ENCODE measurements at regions of chr1 and their contacts with region 1.

Region 1: GRCh38 chr1:165898837-165899236 is 71.4 kb downstream of the UCK2 start:
- DNase-seq: peak in 1 of 2 donors; percentile 61
- ATAC-seq: peak; percentile 74 to 85 (median 80)
- H3K4me3 ChIP-seq: no peak overlapping the region
- H3K27ac ChIP-seq: peak overlapping the region; percentile 93
- H3K4me1 ChIP-seq: peaks cover 46% of the 10 kb centered on the region
- H3K27me3 ChIP-seq: no peaks in the 10 kb centered on the region
- CTCF ChIP-seq: no peak

Region 2: GRCh38 chr1:165842671-165843129 is 56.1 kb before region 1 on chr1:
- intact Hi-C with region 1: loop called in 1 of 2 experiments (anchors 5 kb)
- DNase-seq: no peak
- ATAC-seq: peak; percentile 31 to 84 (median 74)
- H3K4me3 ChIP-seq: no peak overlapping the region
- H3K27ac ChIP-seq: peak overlapping the region; percentile 77
- H3K4me1 ChIP-seq: peaks cover 52% of the 10 kb centered on the region
- H3K27me3 ChIP-seq: no peaks in the 10 kb centered on the region
- CTCF ChIP-seq: no peak

Region 3: GRCh38 chr1:165857046-165857801 is 41.6 kb before region 1 on chr1:
- intact Hi-C with region 1: loop called in 1 of 2 experiments (anchors 5 kb)
- DNase-seq: peak in 1 of 2 donors; percentile 24
- ATAC-seq: peak; percentile 66 to 86 (median 84)
- H3K4me3 ChIP-seq: peak overlapping the region; percentile 34
- H3K27ac ChIP-seq: peak overlapping the region; percentile 90
- H3K4me1 ChIP-seq: peaks cover 72% of the 10 kb centered on the region
- H3K27me3 ChIP-seq: no peaks in the 10 kb centered on the region
- CTCF ChIP-seq: no peak

Region 4: GRCh38 chr1:165914136-165914798 is 15.4 kb after region 1 on chr1:
- intact Hi-C with region 1: no loop called
- DNase-seq: no peak
- ATAC-seq: peak; percentile 79 to 96 (median 86)
- H3K4me3 ChIP-seq: no peak overlapping the region
- H3K27ac ChIP-seq: no peak overlapping the region
- H3K4me1 ChIP-seq: peaks cover 13% of the 10 kb centered on the region
- H3K27me3 ChIP-seq: no peaks in the 10 kb centered on the region
- CTCF ChIP-seq: peak; percentile 92

Region 5: GRCh38 chr1:165928075-165928731 is 29.4 kb after region 1 on chr1:
- intact Hi-C with region 1: no loop called
- DNase-seq: no peak
- ATAC-seq: peak; percentile 55 to 84 (median 68)
- H3K4me3 ChIP-seq: no peak overlapping the region
- H3K27ac ChIP-seq: no peak overlapping the region
- H3K4me1 ChIP-seq: no peaks in the 10 kb centered on the region
- H3K27me3 ChIP-seq: no peaks in the 10 kb centered on the region
- CTCF ChIP-seq: peak; percentile 64

Region 6: GRCh38 chr1:165942927-165943597 is 44.2 kb after region 1 on chr1:
- intact Hi-C with region 1: no loop called
- DNase-seq: no peak
- ATAC-seq: no peak
- H3K4me3 ChIP-seq: no peak overlapping the region
- H3K27ac ChIP-seq: no peak overlapping the region
- H3K4me1 ChIP-seq: no peaks in the 10 kb centered on the region
- H3K27me3 ChIP-seq: peaks cover 0 to 4% (median 2%) of the 10 kb centered on the region in 3 donors
- CTCF ChIP-seq: no peak